Lower lobe of right lung (tissue), 2 donors: ENCODE measurements at regions of chr10 and their contacts with region 1.

Region 1: GRCh38 chr10:67779465-67780203 is 58.4 kb downstream of the DNAJC12 start:
- DNase-seq: no peak
- ATAC-seq: peak; percentile 84 to 86
- H3K4me3 ChIP-seq: no peak overlapping the region
- H3K27ac ChIP-seq: no peak overlapping the region
- H3K4me1 ChIP-seq: no peaks in the 10 kb centered on the region
- H3K27me3 ChIP-seq: no peaks in the 10 kb centered on the region
- CTCF ChIP-seq: peak; percentile 83

Region 2: GRCh38 chr10:66714741-66715140 is 1064.9 kb before region 1 on chr10:
- intact Hi-C with region 1: no loop called
- DNase-seq: no peak
- ATAC-seq: no peak
- H3K4me3 ChIP-seq: no peak overlapping the region
- H3K27ac ChIP-seq: no peak overlapping the region
- H3K4me1 ChIP-seq: no peaks in the 10 kb centered on the region
- H3K27me3 ChIP-seq: no peaks in the 10 kb centered on the region
- CTCF ChIP-seq: no peak

Region 3: DNA sequence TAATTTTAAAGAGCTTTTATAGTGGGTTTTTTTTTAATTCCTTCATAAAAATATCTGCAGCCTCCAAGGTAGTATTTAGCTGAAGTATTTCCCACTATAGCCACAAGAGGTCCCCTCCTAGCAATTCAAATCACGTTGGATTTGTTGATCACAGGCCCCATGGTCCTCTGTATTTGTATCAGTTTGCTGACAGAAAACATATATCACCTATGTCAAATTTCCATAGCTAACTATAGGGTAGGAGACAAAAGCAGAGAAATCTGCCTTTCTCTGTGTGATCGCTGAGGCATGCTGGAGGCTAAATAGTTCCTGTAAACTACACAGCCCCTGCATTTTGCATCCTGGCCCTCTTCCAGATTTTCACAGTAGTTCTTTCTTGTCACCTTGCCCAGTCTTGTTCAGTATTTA is 81.9 kb before region 1 on chr10:
- intact Hi-C with region 1: loop called (anchors 5 kb)
- DNase-seq: no peak
- ATAC-seq: peak; percentile 61 to 65
- H3K4me3 ChIP-seq: no peak overlapping the region
- H3K27ac ChIP-seq: no peak overlapping the region
- H3K4me1 ChIP-seq: no peaks in the 10 kb centered on the region
- H3K27me3 ChIP-seq: peaks cover 9% of the 10 kb centered on the region
- CTCF ChIP-seq: peak; percentile 68

Region 4: GRCh38 chr10:68434657-68435056 is 655.0 kb after region 1 on chr10:
- intact Hi-C with region 1: no loop called
- DNase-seq: no peak
- ATAC-seq: no peak
- H3K4me3 ChIP-seq: no peak overlapping the region
- H3K27ac ChIP-seq: no peak overlapping the region
- H3K4me1 ChIP-seq: no peaks in the 10 kb centered on the region
- H3K27me3 ChIP-seq: no peaks in the 10 kb centered on the region
- CTCF ChIP-seq: no peak